Activated CD4-positive, alpha-beta T cell treated with anti-CD3 and anti-CD28 coated beads for 36 hours (primary cell): ENCODE measurements at regions of chr9 and their contacts with region 1.

Region 1: DNA sequence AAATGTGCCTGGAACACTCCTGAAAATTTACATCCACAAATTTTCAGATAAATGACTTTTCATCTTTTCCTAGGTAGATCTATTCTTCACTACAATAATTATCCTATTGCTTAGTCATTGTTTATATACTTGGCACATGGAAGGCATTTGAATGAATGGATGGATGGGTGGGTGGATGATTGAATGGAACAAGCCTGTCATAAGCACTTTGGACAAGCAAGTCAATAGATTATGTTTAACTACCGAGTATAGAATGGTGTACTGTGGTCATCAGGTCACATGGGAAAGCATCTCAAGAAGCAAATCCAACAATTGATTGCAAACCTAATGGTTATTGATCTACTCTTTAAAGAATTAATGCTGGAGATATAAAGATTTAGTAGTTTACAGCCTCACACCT is 114.4 kb upstream of the DMRTA1 start:
- DNase-seq: no peak
- ATAC-seq: no peak
- H3K4me3 Mint-ChIP-seq: no peak overlapping the region
- H3K27ac Mint-ChIP-seq: no peak overlapping the region
- H3K4me1 Mint-ChIP-seq: no peaks in the 10 kb centered on the region
- H3K27me3 Mint-ChIP-seq: no peaks in the 10 kb centered on the region

Region 2: GRCh38 chr9:22274477-22274876 is 57.7 kb before region 1 on chr9:
- CTCF ChIA-PET with region 1: no interaction called
- POLR2A ChIA-PET with region 1: no interaction called
- intact Hi-C with region 1: loop called in 1 of 2 experiments (anchors 5 kb)
- DNase-seq: no peak
- ATAC-seq: no peak
- H3K4me3 Mint-ChIP-seq: no peak overlapping the region
- H3K27ac Mint-ChIP-seq: no peak overlapping the region
- H3K4me1 Mint-ChIP-seq: no peaks in the 10 kb centered on the region
- H3K27me3 Mint-ChIP-seq: peaks cover 4% of the 10 kb centered on the region

Region 3: DNA sequence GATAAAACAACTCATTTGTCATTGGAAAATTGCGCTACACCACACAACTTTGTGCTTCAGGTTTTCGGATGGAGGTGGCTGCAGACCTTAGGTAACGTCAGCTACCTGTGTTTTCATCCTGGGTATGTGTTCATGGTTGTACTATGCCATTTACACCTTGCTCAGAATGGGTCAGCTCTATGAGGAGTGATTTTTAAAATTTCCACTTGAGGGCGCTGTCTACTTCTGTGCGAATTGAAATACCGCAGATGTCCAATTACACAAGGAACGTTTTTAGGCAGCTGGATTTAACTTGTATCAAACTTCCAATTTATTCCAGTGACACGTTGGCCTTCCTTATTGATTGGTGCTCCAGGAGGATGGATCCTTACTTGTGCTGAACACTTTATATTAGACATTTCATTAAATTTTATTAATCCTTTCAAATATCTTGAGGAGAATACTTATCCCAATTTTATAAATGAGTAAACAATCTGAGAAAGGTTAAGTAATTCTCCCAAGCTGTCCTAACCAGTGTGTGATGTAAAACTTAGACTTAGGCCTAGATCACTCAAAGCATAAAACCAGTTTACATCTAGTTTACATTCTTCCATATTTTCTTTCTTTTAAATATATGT is 137.8 kb after region 1 on chr9:
- CTCF ChIA-PET with region 1: no interaction called
- POLR2A ChIA-PET with region 1: no interaction called
- intact Hi-C with region 1: no loop called
- DNase-seq: peak; percentile 23
- ATAC-seq: peak; percentile 47
- H3K4me3 Mint-ChIP-seq: no peak overlapping the region
- H3K27ac Mint-ChIP-seq: no peak overlapping the region
- H3K4me1 Mint-ChIP-seq: no peaks in the 10 kb centered on the region
- H3K27me3 Mint-ChIP-seq: no peaks in the 10 kb centered on the region